CD8-positive, alpha-beta T cell (primary cell): ENCODE measurements at regions of chr3 and their contacts with region 1.

Region 1: DNA sequence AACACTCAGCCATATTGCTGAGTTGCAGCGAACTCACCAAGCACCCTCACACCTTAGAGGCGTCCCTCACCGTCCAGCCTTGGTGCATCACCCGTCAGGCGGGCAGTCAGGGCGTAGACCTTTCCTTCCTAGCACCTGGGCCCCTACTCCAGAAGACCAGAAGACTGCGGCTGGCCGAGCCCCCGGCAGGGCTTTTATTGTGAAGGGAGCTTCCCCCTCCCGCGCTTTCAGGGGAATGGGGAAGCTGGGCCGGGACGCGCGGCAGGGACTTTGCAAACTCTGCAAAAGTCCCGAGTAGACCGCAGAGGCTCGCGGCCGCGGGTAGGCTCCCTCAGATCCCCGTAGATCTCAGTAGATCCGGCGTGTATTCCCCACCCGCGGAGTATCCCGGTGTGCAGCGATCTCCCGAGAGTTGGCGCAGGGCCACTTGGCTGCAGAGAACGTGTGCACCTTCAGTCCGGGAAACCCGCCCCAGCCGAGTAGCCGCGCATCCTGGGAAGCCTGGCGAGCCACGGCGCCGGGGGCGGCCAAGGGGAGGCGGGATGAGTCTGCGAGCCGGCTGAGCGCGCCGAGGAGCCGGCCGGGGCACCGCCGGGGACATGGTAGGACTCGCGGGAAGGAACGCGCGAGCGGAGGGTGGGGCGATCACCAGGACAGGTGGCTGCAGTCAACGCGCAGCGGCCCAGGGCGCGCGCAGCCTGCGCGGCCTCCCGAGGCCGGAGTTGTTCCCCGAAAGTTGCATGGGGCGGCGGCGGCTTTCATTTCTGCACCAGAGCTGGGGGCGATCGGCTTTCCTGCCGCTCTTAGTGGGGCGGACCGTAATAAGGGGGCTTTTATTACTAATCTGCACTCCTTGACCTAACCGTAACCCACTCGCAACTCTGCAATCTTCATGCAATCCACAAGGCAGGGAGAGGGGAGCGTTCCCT is at the start of gene GASK1A:
- DNase-seq: peak in 5 of 9 experiments; percentile 15 to 58 (median 26)
- ATAC-seq: no peak
- H3K4me3 ChIP-seq: peak within 1 kb of the TSS; percentile 23 to 57
- H3K4me3 Mint-ChIP-seq: peak within 1 kb of the TSS; percentile 78
- H3K27ac ChIP-seq: no peak within 1 kb of the TSS
- H3K27ac Mint-ChIP-seq: no peak within 1 kb of the TSS
- H3K4me1 ChIP-seq: peaks cover 4% of the 10 kb centered on the region
- H3K4me1 Mint-ChIP-seq: peaks cover 9% of the 10 kb centered on the region
- H3K27me3 ChIP-seq: peaks cover 7 to 10% of the 10 kb centered on the region in 2 experiments
- H3K27me3 Mint-ChIP-seq: peaks cover 28% of the 10 kb centered on the region
- CTCF ChIP-seq: no peak
- total RNA-seq, gene GASK1A: 0.19 TPM in 1 of 2 experiments, not detected in the other

Region 2: GRCh38 chr3:43062564-43063040 is 83.3 kb after region 1 on chr3:
- CTCF ChIA-PET with region 1: no interaction called
- POLR2A ChIA-PET with region 1: no interaction called
- intact Hi-C with region 1: loop called in 1 of 2 experiments (anchors 5 kb)
- DNase-seq: no peak
- ATAC-seq: no peak
- H3K4me3 ChIP-seq: no peak overlapping the region
- H3K4me3 Mint-ChIP-seq: no peak overlapping the region
- H3K27ac ChIP-seq: no peak overlapping the region
- H3K27ac Mint-ChIP-seq: no peak overlapping the region
- H3K4me1 ChIP-seq: peaks cover 21% of the 10 kb centered on the region
- H3K4me1 Mint-ChIP-seq: peaks cover 25% of the 10 kb centered on the region
- H3K27me3 ChIP-seq: no peaks in the 10 kb centered on the region
- H3K27me3 Mint-ChIP-seq: no peaks in the 10 kb centered on the region
- CTCF ChIP-seq: no peak

Region 3: DNA sequence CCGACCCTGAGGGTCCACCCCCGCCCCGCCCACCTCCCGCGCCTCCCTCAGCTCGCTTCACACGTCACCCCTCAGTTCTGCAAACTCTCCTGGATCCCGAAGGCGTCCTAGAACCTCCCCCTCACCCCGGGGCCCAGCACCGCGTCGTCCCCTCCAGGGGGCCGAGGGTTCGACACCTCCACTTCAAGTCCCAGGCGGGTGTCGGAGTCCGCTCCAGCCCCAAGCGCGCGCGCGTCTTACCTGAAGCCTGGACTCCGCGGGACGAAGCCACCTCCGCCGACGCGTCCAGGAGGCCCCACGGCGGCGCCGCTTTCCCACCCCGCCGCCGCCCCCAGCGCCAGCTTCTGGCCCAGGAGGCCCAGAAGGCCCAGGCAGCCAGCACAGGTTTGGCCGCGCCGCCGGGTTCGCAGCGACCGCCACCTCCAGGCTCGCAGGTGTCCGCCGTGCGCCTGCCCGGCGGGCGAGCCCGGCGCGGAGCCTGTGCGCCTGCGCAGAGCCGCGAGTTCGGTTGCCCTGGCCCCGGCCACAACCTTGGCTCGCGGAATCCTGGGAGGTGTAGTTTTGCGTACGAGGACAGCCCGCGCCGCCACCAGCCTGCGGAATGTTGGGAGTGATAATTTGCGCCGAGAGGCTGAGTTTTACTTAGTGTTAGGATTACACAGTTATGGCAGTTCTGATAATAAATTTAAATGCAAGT is 126.4 kb after region 1 on chr3 and contains the start of gene POMGNT2:
- CTCF ChIA-PET with region 1: no interaction called
- POLR2A ChIA-PET with region 1: no interaction called
- intact Hi-C with region 1: no loop called
- DNase-seq: peak; percentile 75 to 94 (median 87)
- ATAC-seq: peak; percentile 93
- H3K4me3 ChIP-seq: peak within 1 kb of the TSS; percentile 67 to 75
- H3K4me3 Mint-ChIP-seq: peak within 1 kb of the TSS; percentile 87
- H3K27ac ChIP-seq: peak within 1 kb of the TSS in 1 of 2 experiments; percentile 50
- H3K27ac Mint-ChIP-seq: peak within 1 kb of the TSS; percentile 74
- H3K4me1 ChIP-seq: peaks cover 15% of the 10 kb centered on the region
- H3K4me1 Mint-ChIP-seq: peaks cover 30% of the 10 kb centered on the region
- H3K27me3 ChIP-seq: no peaks in the 10 kb centered on the region
- H3K27me3 Mint-ChIP-seq: no peaks in the 10 kb centered on the region
- CTCF ChIP-seq: no peak
- total RNA-seq, gene POMGNT2: 9.8 to 11.0 TPM